ENCODE measurements at regions of chr20 and their contacts with region 1.

Region 1: GRCh38 chr20:3173610-3174441 is 477 bp upstream of the LZTS3 start:
- DNase-seq: peak; percentile 86
- H3K4me3 Mint-ChIP-seq: peak overlapping the region; percentile 85
- H3K27ac Mint-ChIP-seq: no peak overlapping the region
- H3K4me1 Mint-ChIP-seq: peaks cover 12% of the 10 kb centered on the region
- H3K27me3 Mint-ChIP-seq: peaks cover 44% of the 10 kb centered on the region

Region 2: DNA sequence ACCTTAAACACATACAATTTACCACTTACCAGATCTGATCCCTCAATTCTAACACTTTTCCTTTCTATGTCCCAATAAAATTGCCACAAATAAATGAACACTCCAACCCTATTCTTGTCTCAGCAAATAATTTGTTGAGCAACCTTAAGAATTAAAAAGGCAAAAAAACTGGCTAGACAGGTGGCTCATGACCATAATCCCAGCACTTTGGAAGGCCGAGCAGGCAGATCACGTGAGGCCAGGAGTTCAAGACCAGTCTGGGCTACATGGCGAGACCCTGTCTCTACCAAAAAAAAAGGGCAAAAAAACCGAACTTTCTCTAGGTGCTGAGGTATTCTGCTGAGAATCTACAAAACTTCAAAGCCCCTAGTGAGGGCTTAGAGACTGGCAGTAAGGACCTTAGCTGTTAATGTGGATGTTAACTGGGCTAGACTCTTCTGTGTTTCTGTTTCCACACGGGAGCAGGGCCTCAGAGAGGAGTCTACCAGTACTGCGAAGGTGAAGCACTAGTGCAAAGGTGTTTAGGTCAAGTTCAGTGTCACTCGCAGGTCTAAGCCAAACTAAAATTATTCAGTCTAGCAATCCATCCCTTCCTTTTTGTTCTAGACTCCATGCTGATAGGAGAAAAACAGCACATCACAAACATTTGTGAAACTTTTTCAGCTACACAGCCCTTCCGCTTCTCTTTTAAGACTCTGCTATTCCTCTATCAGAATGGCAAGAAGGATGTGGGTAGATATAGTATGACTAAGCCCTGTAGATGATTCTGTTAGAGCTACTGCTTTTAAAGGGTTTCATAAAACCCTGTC is 16.8 kb before region 1 on chr20:
- intact Hi-C with region 1: loop called (anchors 1 kb)
- DNase-seq: no peak
- H3K4me3 Mint-ChIP-seq: peak overlapping the region; percentile 78
- H3K27ac Mint-ChIP-seq: peak overlapping the region; percentile 90
- H3K4me1 Mint-ChIP-seq: peaks cover 44% of the 10 kb centered on the region
- H3K27me3 Mint-ChIP-seq: no peaks in the 10 kb centered on the region

Region 3: GRCh38 chr20:3204124-3204822 is 30.4 kb after region 1 on chr20 and contains the start of gene DDRGK1:
- intact Hi-C with region 1: loop called (anchors 1 kb)
- DNase-seq: peak; percentile 86
- H3K4me3 Mint-ChIP-seq: peak within 1 kb of the TSS; percentile 96
- H3K27ac Mint-ChIP-seq: peak within 1 kb of the TSS; percentile 97
- H3K4me1 Mint-ChIP-seq: peaks cover 23% of the 10 kb centered on the region
- H3K27me3 Mint-ChIP-seq: no peaks in the 10 kb centered on the region
- total RNA-seq, gene DDRGK1: 67.5 and 72.3 TPM in 2 replicates

Region 4: DNA sequence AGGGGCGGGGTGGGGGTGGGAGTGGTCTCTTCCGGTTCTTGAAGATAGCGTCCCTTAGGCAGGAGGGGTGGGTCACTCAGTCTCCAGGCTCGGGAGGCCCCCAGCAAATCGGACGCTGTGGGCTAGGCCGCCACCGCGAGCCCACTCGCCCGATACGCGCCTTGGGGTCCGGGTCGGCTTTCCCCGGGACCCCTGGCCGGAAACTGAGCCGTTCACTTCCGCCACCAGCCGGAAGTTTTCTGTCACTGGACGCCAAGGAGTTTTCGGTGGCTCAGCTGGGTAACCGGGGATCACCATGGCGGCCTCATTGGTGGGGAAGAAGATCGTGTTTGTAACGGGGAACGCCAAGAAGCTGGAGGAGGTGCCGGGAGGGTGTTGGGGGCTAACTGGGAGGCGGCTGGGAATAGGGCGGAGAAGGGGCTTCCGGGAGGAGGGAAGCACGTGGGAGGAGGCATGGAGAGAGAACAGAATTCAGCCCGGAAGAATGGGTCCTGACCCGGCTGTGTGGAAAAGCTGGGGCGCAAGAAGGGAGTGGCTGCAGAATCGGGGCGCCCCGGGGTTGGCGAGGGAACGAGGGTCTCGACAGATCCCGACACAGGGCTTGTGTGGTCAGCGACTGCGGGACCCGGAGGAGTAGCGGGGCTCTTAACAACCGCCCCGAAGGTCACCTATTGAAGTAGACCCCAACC is 35.6 kb after region 1 on chr20 and contains the start of gene ITPA:
- intact Hi-C with region 1: loop called (anchors 1 kb)
- DNase-seq: peak; percentile 58
- H3K4me3 Mint-ChIP-seq: peak within 1 kb of the TSS; percentile 97
- H3K27ac Mint-ChIP-seq: peak within 1 kb of the TSS; percentile 93
- H3K4me1 Mint-ChIP-seq: peaks cover 12% of the 10 kb centered on the region
- H3K27me3 Mint-ChIP-seq: no peaks in the 10 kb centered on the region
- total RNA-seq, gene ITPA: 93.3 and 96.0 TPM in 2 replicates

Region 5: GRCh38 chr20:3239026-3239866 is 65.4 kb after region 1 on chr20 and contains the start of gene SLC4A11:
- intact Hi-C with region 1: loop called (anchors 2 kb)
- DNase-seq: peak; percentile 27
- H3K4me3 Mint-ChIP-seq: peak within 1 kb of the TSS; percentile 91
- H3K27ac Mint-ChIP-seq: peak within 1 kb of the TSS; percentile 74
- H3K4me1 Mint-ChIP-seq: peaks cover 8% of the 10 kb centered on the region
- H3K27me3 Mint-ChIP-seq: peaks cover 60% of the 10 kb centered on the region
- total RNA-seq, gene SLC4A11: 3.2 and 3.3 TPM in 2 replicates

Region 6: GRCh38 chr20:3407771-3408637 is 234.2 kb after region 1 on chr20:
- intact Hi-C with region 1: loop called (anchors 1 kb)
- DNase-seq: peak; percentile 63
- H3K4me3 Mint-ChIP-seq: peak overlapping the region; percentile 95
- H3K27ac Mint-ChIP-seq: peak overlapping the region; percentile 93
- H3K4me1 Mint-ChIP-seq: peaks cover 32% of the 10 kb centered on the region
- H3K27me3 Mint-ChIP-seq: peaks cover 26% of the 10 kb centered on the region